Calu3 (cell line): ENCODE measurements at regions of chr5 and their contacts with region 1.

Region 1: GRCh38 chr5:116557669-116558271 is 16.9 kb downstream of the SEMA6A start:
- DNase-seq: peak; percentile 26
- H3K4me3 Mint-ChIP-seq: no peak overlapping the region
- H3K27ac Mint-ChIP-seq: no peak overlapping the region
- H3K4me1 Mint-ChIP-seq: peaks cover 16% of the 10 kb centered on the region
- H3K27me3 Mint-ChIP-seq: no peaks in the 10 kb centered on the region
- CTCF ChIP-seq: peak; percentile 71

Region 2: DNA sequence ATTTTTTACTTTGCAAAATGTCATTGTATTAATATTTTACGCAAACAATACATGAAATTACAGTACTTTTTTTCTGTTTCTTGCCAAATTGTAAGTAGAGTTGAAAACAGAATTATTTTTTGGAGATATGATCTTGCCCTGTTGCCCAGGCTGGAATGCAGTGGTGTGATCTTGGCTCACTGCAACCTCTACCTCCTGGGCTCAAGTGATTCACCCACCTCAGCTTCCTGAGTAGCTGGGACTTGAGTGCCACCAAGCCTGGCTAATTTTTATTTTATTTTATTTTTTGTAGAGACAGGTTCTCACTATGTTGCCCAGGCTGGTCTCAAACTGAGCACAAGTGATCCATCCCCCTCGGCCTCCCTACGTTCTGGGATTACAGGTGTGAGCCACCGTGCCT is 360.5 kb before region 1 on chr5:
- CTCF ChIA-PET with region 1: no interaction called
- intact Hi-C with region 1: no loop called
- DNase-seq: no peak
- H3K4me3 Mint-ChIP-seq: no peak overlapping the region
- H3K27ac Mint-ChIP-seq: no peak overlapping the region
- H3K4me1 Mint-ChIP-seq: no peaks in the 10 kb centered on the region
- H3K27me3 Mint-ChIP-seq: no peaks in the 10 kb centered on the region
- CTCF ChIP-seq: no peak

Region 3: DNA sequence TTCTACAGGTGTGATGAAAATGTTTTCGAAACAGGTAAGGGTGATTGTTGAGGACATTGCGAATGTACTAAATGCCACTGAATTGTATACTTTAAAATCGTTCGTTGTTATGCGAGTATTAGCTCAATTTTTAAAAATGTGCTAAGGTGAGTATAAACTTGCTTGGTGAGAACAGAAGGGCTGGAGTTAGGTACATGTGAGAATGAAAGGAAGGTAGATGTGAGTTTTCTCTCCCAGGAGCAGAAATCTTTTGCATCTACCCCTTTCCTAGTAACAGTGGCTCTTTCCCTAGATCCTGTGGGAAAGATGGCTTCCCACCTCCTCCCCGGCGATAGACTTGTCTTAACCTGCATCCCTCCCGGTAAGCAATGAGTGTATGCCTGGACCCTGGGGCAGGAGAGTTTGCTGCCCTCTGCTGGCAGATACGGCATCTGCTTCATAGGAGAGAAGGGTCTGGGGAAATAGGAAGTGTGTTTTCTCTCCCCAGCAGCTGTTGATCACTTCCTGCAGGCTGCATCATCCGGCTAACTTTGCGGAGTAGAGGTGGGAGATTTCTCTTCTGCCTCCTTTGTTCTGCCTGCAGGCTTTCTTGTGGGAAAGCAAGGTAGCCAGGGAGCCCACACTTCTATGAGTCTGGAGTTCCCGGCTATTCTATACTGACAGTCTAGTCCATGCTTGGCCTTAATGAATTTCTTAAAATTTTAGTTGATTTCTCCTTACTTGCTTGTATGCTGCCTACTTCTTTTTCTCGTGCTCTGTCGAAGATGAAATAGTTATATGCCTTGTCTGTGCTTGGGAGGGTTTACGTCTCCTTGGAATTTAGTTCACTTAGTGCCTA is 390.1 kb after region 1 on chr5:
- CTCF ChIA-PET with region 1: no interaction called
- intact Hi-C with region 1: loop called (anchors 1 kb)
- DNase-seq: peak; percentile 87
- H3K4me3 Mint-ChIP-seq: no peak overlapping the region
- H3K27ac Mint-ChIP-seq: no peak overlapping the region
- H3K4me1 Mint-ChIP-seq: peaks cover 18% of the 10 kb centered on the region
- H3K27me3 Mint-ChIP-seq: no peaks in the 10 kb centered on the region
- CTCF ChIP-seq: peak; percentile 83